HCT116 (cell line): ENCODE measurements at regions of chr15 and their contacts with region 1.

Region 1: GRCh38 chr15:31540633-31541032 is 214.0 kb downstream of the KLF13 start:
- DNase-seq: no peak
- ATAC-seq: no peak
- H3K4me3 ChIP-seq: no peak overlapping the region
- H3K27ac ChIP-seq: no peak overlapping the region
- H3K4me1 ChIP-seq: no peaks in the 10 kb centered on the region
- H3K27me3 ChIP-seq: peaks cover 74% of the 10 kb centered on the region
- CTCF ChIP-seq: no peak
- POLR2A ChIP-seq: no peak
- RAD21 ChIP-seq: no peak

Region 2: DNA sequence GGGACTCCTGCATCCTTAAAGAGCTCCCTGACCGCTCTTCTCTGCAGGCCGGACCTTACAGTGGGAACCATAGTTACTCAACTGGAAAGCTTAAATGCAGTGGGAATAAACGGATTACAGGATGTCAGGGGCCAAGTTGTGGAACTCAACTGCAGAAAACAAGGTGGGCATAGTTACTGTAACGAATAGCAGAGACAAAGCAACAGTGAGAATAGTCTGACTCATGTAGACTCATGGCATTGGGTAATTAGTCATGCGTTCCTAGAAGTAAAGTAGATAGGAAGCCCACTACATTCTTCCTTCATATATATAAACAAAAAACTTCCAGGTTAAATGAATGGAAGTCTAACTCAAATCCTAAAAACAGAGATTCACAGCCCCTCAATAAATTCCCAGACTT is 394.2 kb after region 1 on chr15:
- CTCF ChIA-PET with region 1: no interaction called
- POLR2A ChIA-PET with region 1: no interaction called
- RAD21 ChIA-PET with region 1: no interaction called
- intact Hi-C with region 1: loop called (anchors 10 kb)
- DNase-seq: no peak
- ATAC-seq: no peak
- H3K4me3 ChIP-seq: no peak overlapping the region
- H3K27ac ChIP-seq: no peak overlapping the region
- H3K4me1 ChIP-seq: no peaks in the 10 kb centered on the region
- H3K27me3 ChIP-seq: peaks cover 16% of the 10 kb centered on the region; the same call in 1 of the 2 replicates
- CTCF ChIP-seq: no peak
- POLR2A ChIP-seq: no peak
- RAD21 ChIP-seq: no peak